Natural killer cell (primary cell): ENCODE measurements at regions of chr1 and their contacts with region 1.

Region 1: DNA sequence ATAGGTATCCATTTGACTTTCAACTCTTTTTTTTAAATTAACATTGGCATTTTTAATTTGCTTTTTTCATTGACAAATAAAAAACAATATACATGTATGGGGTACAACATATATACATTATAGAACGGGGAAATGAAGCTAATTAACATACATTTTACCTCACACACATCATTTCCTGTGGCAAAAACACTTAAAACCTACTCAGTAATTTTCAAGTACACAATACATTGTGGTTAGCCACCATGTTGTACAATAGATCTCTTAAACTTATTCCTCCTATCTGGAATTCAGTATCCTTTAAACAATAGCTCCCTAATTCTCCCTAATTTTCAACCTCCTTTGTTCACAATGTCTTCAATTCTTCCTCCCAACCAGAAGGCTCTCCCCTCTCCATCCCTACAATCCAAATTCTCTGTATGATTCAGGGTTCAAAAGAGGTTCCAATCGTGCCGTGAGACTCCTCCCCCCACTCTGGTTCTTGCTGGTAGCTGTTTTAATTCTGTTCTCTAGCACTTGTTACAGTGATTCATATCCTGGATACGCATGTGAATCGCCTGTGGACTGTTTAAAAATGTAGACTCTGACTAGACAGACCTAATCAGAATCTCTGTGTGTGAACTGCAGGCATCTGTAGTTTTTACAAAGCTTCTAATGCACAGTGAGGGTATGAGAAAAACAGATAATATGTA is 87.6 kb upstream of the DUSP10 start:
- DNase-seq: peak; percentile 51 to 75
- ATAC-seq: peak; percentile 80 to 92 (median 89)
- H3K4me3 ChIP-seq: no peak overlapping the region
- H3K4me3 Mint-ChIP-seq: peak overlapping the region; percentile 78
- H3K27ac ChIP-seq: peak overlapping the region; percentile 94
- H3K27ac Mint-ChIP-seq: peak overlapping the region; percentile 89 to 92
- H3K4me1 ChIP-seq: peaks cover 37% of the 10 kb centered on the region
- H3K4me1 Mint-ChIP-seq: peaks cover 83 to 84% of the 10 kb centered on the region in 2 donors
- H3K27me3 ChIP-seq: no peaks in the 10 kb centered on the region
- H3K27me3 Mint-ChIP-seq: no peaks in the 10 kb centered on the region
- CTCF ChIP-seq: no peak

Region 2: DNA sequence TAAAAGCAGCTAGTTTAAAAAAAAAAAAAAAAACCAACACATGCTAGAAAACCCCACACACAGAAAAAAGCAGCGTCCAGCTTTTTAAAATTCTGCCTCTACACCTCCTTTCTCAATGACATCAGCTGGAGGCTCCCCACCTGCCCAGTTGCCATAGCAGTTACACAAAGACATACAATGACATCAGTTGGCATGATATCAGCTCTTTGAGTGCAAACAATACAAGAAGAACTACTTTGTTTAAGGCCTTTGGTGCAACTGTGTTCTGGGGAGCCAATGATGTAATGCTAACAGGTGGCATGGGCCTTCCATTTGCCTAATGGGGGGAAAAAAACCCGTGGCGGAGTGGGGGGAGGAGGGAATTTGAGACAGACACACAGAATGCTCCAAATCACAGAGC is 120.5 kb before region 1 on chr1:
- intact Hi-C with region 1: loop called (anchors 1 kb)
- DNase-seq: peak; percentile 48 to 87
- ATAC-seq: peak; percentile 41 to 61 (median 54)
- H3K4me3 ChIP-seq: no peak overlapping the region
- H3K4me3 Mint-ChIP-seq: peak overlapping the region; percentile 62
- H3K27ac ChIP-seq: peak overlapping the region; percentile 83
- H3K27ac Mint-ChIP-seq: peak overlapping the region; percentile 91 to 99
- H3K4me1 ChIP-seq: peaks cover 57% of the 10 kb centered on the region
- H3K4me1 Mint-ChIP-seq: peaks cover 80 to 84% of the 10 kb centered on the region in 2 donors
- H3K27me3 ChIP-seq: no peaks in the 10 kb centered on the region
- H3K27me3 Mint-ChIP-seq: no peaks in the 10 kb centered on the region
- CTCF ChIP-seq: no peak

Region 3: GRCh38 chr1:221794079-221794670 is 35.3 kb before region 1 on chr1:
- intact Hi-C with region 1: loop called (anchors 1 kb)
- DNase-seq: peak in 1 of 2 donors; percentile 79
- ATAC-seq: peak; percentile 76 to 89 (median 82)
- H3K4me3 ChIP-seq: no peak overlapping the region
- H3K4me3 Mint-ChIP-seq: peak overlapping the region; percentile 65
- H3K27ac ChIP-seq: peak overlapping the region; percentile 57
- H3K27ac Mint-ChIP-seq: peak overlapping the region; percentile 88 to 90
- H3K4me1 ChIP-seq: peaks cover 16% of the 10 kb centered on the region
- H3K4me1 Mint-ChIP-seq: peaks cover 19 to 26% of the 10 kb centered on the region in 2 donors
- H3K27me3 ChIP-seq: no peaks in the 10 kb centered on the region
- H3K27me3 Mint-ChIP-seq: no peaks in the 10 kb centered on the region
- CTCF ChIP-seq: no peak

Region 4: GRCh38 chr1:221839796-221840395 is 10.4 kb after region 1 on chr1:
- intact Hi-C with region 1: loop called (anchors 1 kb)
- DNase-seq: peak; percentile 82 to 86
- ATAC-seq: peak; percentile 82 to 94 (median 93)
- H3K4me3 ChIP-seq: no peak overlapping the region
- H3K4me3 Mint-ChIP-seq: peak overlapping the region; percentile 13
- H3K27ac ChIP-seq: peak overlapping the region; percentile 34
- H3K27ac Mint-ChIP-seq: peak overlapping the region; percentile 89 to 92
- H3K4me1 ChIP-seq: peaks cover 28% of the 10 kb centered on the region
- H3K4me1 Mint-ChIP-seq: peaks cover 37 to 43% of the 10 kb centered on the region in 2 donors
- H3K27me3 ChIP-seq: no peaks in the 10 kb centered on the region
- H3K27me3 Mint-ChIP-seq: peaks cover 0 to 3% of the 10 kb centered on the region in 2 donors
- CTCF ChIP-seq: no peak

Region 5: DNA sequence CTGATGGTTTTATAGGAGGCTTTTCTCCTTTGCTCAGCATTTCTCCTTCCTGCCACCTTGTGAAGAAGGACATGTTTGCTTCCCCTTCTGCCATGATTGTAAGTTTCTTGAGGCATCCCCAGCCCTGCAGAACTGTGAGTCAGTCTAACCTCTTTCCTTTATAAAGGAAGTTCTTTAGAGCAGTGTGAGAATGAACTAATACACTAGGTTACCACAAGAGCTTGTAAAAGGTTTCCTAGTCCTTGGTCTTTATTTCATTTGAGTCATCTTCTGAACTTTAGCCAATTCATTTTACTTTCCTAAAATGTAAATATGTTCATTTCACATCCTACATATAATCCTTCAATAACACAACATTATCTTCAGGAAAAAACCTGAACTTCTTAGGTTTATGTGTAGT is 353.2 kb after region 1 on chr1:
- intact Hi-C with region 1: no loop called
- DNase-seq: no peak
- ATAC-seq: peak in 1 of 3 donors; percentile 50
- H3K4me3 ChIP-seq: no peak overlapping the region
- H3K4me3 Mint-ChIP-seq: no peak overlapping the region
- H3K27ac ChIP-seq: no peak overlapping the region
- H3K27ac Mint-ChIP-seq: no peak overlapping the region
- H3K4me1 ChIP-seq: no peaks in the 10 kb centered on the region
- H3K4me1 Mint-ChIP-seq: peaks cover 8% of the 10 kb centered on the region in 2 donors
- H3K27me3 ChIP-seq: no peaks in the 10 kb centered on the region
- H3K27me3 Mint-ChIP-seq: peaks cover 7 to 10% of the 10 kb centered on the region in 2 donors
- CTCF ChIP-seq: no peak